ENCODE measurements at regions of chr15 and their contacts with region 1.

Region 1: DNA sequence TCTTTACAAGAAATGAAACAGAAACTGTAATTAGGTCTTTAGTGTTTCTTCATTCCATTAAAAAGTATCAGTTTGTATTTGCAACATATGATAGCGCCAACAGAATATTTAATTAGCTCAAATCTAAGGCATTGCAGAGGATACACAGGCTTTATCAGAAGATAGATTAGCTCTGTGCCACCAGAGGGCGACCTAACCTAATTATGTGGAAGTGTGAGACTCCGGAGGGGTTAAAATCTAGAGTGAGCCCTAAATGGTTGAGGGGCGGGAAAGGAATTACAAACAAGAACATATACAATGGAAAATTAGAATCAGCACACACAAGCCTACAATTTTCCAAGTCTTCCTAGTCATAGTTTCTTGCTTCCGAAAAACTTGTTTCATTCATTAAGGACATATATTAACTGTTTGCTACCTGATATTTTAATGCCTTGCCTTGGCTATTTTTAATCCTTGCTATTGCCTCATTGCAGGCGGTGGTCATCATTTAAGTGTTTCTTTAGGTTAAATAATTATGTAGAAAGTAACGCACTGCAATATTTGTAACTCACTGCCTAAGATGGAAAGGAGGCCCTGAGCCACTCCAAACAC is 18.0 kb upstream of the RYR3 start:
- DNase-seq: peak; percentile 42
- H3K4me3 ChIP-seq: no peak overlapping the region
- H3K27ac ChIP-seq: no peak overlapping the region
- H3K4me1 ChIP-seq: peaks cover 24% of the 10 kb centered on the region
- H3K27me3 ChIP-seq: no peaks in the 10 kb centered on the region
- CTCF ChIP-seq: peak; percentile 74 to 77

Region 2: GRCh38 chr15:33242669-33243191 is 50.1 kb before region 1 on chr15:
- CTCF ChIA-PET with region 1: interaction called, 3 read pairs
- dilution Hi-C with region 1: no loop called
- in situ Hi-C with region 1: no loop called
- intact Hi-C with region 1: loop called (anchors 1 kb)
- DNase-seq: peak; percentile 86
- H3K4me3 ChIP-seq: peak overlapping the region in 2 of 3 experiments; percentile 4 to 15
- H3K27ac ChIP-seq: peak overlapping the region; percentile 100
- H3K4me1 ChIP-seq: peaks cover 34% of the 10 kb centered on the region
- H3K27me3 ChIP-seq: no peaks in the 10 kb centered on the region
- CTCF ChIP-seq: peak; percentile 53 to 55

Region 3: DNA sequence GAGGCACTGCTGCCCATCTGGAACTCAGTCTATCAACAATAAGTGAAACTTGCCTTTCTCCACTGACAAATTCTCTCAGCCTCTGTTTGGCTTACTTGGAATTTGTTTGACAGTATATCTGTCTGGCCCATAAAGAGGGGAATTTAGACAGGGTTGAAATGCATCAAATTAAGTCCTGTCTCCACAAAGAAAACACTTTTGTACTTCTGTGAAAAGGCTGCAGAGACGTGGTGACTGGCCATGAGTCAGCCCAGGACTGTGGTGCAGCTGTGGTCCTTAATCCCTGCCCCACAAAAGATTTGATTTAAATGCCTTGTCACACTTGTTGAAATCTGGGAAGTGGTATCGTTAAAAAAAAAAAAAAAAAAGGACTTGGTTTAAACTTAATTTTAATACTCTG is 65.5 kb after region 1 on chr15:
- CTCF ChIA-PET with region 1: no interaction called
- dilution Hi-C with region 1: no loop called
- in situ Hi-C with region 1: no loop called
- intact Hi-C with region 1: no loop called
- DNase-seq: peak; percentile 55
- H3K4me3 ChIP-seq: no peak overlapping the region
- H3K27ac ChIP-seq: peak overlapping the region; percentile 9
- H3K4me1 ChIP-seq: peaks cover 14% of the 10 kb centered on the region
- H3K27me3 ChIP-seq: peaks cover 2% of the 10 kb centered on the region
- CTCF ChIP-seq: no peak

Region 4: DNA sequence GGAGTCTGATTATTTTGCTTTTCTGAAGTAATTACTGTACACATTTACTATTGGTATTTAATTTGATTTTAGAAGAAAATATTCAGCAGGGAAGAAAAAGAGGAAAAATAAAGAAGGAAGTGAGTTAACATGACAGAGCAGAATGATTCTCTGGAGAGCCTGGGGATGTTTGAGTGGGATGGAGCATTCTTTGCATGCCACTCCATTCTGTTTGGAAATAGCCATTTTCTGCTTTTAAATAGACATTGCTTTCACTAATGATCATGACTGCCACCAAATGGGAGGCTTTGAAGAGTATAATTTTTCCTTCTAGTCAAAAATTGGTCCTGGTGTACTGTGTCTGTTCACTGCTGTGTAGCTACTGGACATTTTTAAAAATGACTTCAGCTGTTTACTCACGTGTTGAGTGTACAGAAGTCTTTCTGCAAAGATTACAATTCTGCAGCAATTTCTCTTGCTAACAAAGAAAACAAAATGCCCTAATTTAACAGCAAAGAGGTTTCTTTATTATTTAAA is 214.0 kb after region 1 on chr15:
- CTCF ChIA-PET with region 1: no interaction called
- dilution Hi-C with region 1: no loop called
- in situ Hi-C with region 1: no loop called
- intact Hi-C with region 1: loop called (anchors 10 kb)
- DNase-seq: no peak
- H3K4me3 ChIP-seq: no peak overlapping the region
- H3K27ac ChIP-seq: no peak overlapping the region
- H3K4me1 ChIP-seq: no peaks in the 10 kb centered on the region
- H3K27me3 ChIP-seq: no peaks in the 10 kb centered on the region
- CTCF ChIP-seq: no peak

Region 5: GRCh38 chr15:33675246-33675645 is 382.4 kb after region 1 on chr15:
- CTCF ChIA-PET with region 1: interaction called, 14 read pairs
- dilution Hi-C with region 1: no loop called
- in situ Hi-C with region 1: no loop called
- intact Hi-C with region 1: loop called (anchors 1 kb)
- DNase-seq: peak; percentile 27
- H3K4me3 ChIP-seq: no peak overlapping the region
- H3K27ac ChIP-seq: no peak overlapping the region
- H3K4me1 ChIP-seq: no peaks in the 10 kb centered on the region
- H3K27me3 ChIP-seq: peaks cover 4% of the 10 kb centered on the region
- CTCF ChIP-seq: peak; percentile 61 to 68

Region 6: DNA sequence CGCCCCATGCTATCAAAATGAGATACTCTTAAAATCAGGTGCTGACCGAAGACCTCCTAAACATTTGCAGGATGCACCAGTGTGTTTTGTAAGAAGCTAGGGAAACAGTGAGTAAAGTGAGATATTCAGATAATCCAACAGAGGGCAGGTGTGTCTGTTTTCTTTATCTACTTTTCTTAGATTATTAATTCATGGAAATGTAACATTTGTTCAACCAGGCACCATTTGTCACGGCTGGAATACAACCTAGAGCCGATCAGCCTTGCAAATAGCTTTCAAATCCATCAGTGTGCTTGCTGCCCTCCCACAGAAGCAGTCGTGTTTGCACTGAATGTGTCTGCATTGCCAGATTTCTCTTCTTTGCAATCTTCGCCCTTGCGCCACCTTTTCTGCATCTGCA is 473.6 kb after region 1 on chr15:
- CTCF ChIA-PET with region 1: interaction called, 18 read pairs
- dilution Hi-C with region 1: no loop called
- in situ Hi-C with region 1: no loop called
- intact Hi-C with region 1: no loop called
- DNase-seq: no peak
- H3K4me3 ChIP-seq: no peak overlapping the region
- H3K27ac ChIP-seq: no peak overlapping the region
- H3K4me1 ChIP-seq: no peaks in the 10 kb centered on the region
- H3K27me3 ChIP-seq: no peaks in the 10 kb centered on the region
- CTCF ChIP-seq: peak; percentile 2 to 22

Measured in mammary epithelial cell (primary cell).